Panc1 (cell line): ENCODE measurements at regions of chr15 and their contacts with region 1.

Region 1: DNA sequence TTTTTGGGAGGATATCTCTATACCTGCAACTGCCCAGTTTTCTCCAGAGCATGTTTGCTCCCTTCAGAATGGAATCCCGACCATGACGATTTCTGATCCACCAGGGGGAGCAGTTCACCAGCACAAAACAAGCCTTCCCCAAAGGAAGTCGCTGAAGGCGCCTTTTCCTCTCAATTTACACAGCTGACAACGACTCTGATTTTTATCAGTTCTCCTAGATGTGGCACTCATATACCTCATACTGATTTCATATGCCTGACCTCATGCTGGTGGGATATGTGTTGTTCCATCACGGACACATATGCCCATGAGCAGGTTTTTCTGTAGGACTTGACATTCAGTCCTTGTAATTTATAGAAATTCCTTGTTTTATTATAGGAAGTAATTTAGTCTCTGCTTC is 1028.2 kb downstream of the MCTP2 start:
- DNase-seq: peak; percentile 50
- ATAC-seq: peak; percentile 96
- H3K4me3 ChIP-seq: no peak overlapping the region
- H3K27ac ChIP-seq: peak overlapping the region; percentile 51; the same call in 1 of the 2 replicates
- H3K4me1 ChIP-seq: peaks cover 13% of the 10 kb centered on the region
- H3K27me3 ChIP-seq: no peaks in the 10 kb centered on the region
- CTCF ChIP-seq: peak; percentile 85

Region 2: DNA sequence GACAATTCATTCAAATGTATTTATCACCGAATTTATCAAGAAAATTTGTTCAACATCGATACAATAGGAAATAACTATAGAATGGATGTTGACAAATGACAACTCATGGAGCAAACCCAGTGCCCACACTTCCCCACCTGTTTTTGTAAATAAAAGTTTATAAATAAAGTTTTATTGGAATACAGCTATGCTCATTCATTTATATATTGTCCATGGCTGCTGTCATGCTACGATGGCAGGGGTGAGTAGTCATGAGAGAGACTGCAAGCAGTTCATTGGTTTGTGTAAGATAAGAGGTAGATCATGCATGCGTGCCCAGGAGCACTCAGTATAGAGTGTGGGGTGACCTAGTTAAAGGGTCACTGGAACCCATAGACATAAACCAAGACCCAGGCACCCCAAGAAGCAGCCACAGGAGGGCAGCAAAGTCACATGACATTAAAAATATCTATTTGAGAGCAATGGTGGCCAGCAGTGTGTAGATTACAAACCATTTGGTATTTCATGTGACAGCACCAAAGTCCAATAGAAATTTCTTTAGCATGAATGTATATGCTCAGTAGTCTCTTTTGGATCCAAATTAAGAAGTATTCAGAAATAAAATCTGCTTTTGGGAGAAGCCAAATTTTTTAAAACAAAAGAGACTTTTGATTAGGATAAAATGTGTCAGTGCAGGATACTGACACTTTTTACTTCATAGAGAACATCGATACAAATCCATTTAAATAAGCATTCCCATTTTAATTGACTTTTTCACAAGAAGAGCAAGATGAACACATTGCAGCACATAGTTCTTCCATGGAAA is 233.4 kb before region 1 on chr15:
- CTCF ChIA-PET with region 1: no interaction called
- POLR2A ChIA-PET with region 1: no interaction called
- in situ Hi-C with region 1: no loop called
- intact Hi-C with region 1: loop called (anchors 10 kb)
- DNase-seq: no peak
- ATAC-seq: peak; percentile 83
- H3K4me3 ChIP-seq: no peak overlapping the region
- H3K27ac ChIP-seq: no peak overlapping the region
- H3K4me1 ChIP-seq: no peaks in the 10 kb centered on the region
- H3K27me3 ChIP-seq: no peaks in the 10 kb centered on the region
- CTCF ChIP-seq: peak; percentile 78

Region 3: DNA sequence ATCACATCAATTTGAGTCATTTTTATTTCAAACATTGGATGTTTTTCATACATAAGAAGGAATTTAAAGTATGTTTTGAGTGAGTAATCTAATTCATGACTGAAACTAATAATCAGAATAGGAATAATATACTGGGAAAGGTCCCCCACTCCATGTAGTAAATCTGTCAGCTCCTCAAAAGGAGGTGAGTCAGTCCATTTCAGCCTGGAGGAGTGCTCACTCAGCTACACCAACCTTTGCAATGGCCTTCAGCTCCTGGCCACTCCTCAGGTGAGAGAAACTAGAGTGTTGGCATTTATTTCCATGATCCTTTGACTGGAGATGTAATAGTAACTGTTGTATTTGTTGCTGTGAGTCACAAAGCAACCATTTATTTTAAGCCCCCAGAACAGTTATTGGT is 1956.1 kb after region 1 on chr15:
- CTCF ChIA-PET with region 1: interaction called, 17 read pairs
- POLR2A ChIA-PET with region 1: no interaction called
- in situ Hi-C with region 1: no loop called
- intact Hi-C with region 1: no loop called
- DNase-seq: no peak
- ATAC-seq: no peak
- H3K4me3 ChIP-seq: no peak overlapping the region
- H3K27ac ChIP-seq: no peak overlapping the region
- H3K4me1 ChIP-seq: no peaks in the 10 kb centered on the region
- H3K27me3 ChIP-seq: no peaks in the 10 kb centered on the region
- CTCF ChIP-seq: no peak